Panc1 (cell line): ENCODE measurements at regions of chr3 and their contacts with region 1.

Region 1: DNA sequence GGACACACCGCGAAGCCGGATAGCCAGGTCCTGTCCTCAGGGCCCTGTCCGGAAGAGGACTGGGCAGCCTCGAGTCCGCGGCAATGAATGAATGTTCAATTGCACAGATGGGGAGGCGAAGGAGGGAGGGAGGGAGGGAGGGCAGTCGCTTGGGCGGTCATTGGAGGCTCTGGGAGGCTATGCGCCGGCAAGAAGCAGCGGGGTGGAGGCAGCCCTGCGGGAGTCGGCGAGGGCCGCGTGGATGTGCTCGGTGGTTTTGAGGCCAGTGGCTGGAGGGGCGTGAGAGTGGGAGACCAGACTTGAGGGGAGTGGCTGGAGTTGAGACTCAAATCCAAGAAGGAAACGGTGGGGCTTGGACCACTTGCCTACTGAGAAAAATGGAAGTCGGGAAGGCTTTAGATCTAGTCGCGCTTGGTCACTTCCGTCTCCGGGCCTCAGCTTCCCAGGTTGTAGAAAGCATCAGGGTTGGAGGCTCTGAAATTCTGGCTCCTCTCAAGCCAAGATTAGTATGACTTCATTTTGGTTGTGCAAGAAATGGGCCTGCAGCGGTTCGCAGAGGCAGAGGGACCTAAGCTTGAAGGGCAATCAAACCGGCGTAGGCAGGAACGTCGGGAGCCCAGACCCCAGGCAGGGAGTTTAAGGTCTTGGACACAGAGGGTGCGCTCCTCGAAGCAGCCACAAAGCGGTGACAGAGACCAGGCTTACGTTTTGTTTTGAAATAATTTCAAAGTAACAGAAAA is 21.1 kb upstream of the PLXND1 start:
- DNase-seq: peak; percentile 55
- ATAC-seq: peak; percentile 53
- H3K4me3 ChIP-seq: peak overlapping the region; percentile 59 to 77
- H3K27ac ChIP-seq: peak overlapping the region; percentile 97
- H3K4me1 ChIP-seq: peaks cover 36% of the 10 kb centered on the region
- H3K27me3 ChIP-seq: no peaks in the 10 kb centered on the region
- CTCF ChIP-seq: no peak

Region 2: DNA sequence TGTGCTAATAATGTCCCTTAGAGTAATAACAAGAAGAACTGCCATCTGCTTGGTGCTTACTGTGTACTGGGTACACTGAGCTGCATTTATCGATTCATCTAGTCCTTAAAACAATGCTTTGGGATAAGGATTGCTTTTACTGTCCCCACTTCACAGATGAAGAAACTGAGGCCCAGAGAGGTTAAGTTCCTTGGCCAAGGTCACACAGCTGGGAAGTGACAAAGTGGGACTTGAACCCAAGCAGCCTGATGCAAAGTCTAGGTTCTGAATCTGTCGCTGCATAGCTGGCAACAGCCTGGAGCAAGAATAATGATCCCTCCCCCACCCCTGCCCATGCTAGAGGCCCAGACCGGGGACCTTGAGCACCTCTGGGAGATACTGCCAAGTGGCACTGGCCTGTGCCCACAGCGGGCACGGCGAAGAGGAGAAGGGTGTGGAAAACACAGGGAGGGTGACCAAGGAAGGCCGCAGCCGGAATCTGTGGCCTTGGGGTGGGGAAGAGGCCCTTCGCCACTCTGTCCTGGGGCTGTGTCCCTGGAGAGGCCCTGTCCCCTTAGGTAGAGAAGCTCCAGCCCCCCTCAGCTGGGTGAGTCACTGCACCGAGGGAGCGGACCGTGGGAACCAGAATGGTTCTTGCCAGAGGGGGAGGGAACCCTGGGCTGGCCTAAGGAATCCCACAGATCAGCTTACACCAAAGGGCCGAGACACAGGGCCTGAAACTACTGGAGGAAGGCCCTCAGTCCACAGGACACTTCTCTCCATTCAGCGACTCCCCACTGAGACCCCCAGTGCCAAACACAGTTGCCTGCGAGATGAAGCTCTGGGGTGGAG is 24.7 kb before region 1 on chr3:
- CTCF ChIA-PET with region 1: interaction called, 10 read pairs
- POLR2A ChIA-PET with region 1: no interaction called
- in situ Hi-C with region 1: no loop called
- intact Hi-C with region 1: no loop called
- DNase-seq: no peak
- ATAC-seq: peak; percentile 13
- H3K4me3 ChIP-seq: peak overlapping the region; percentile 57 to 92
- H3K27ac ChIP-seq: peak overlapping the region; percentile 99
- H3K4me1 ChIP-seq: peaks cover 61% of the 10 kb centered on the region
- H3K27me3 ChIP-seq: no peaks in the 10 kb centered on the region
- CTCF ChIP-seq: no peak

Region 3: GRCh38 chr3:129768728-129769127 is 141.1 kb after region 1 on chr3:
- CTCF ChIA-PET with region 1: no interaction called
- POLR2A ChIA-PET with region 1: no interaction called
- in situ Hi-C with region 1: no loop called
- intact Hi-C with region 1: no loop called
- DNase-seq: no peak
- ATAC-seq: no peak
- H3K4me3 ChIP-seq: no peak overlapping the region
- H3K27ac ChIP-seq: no peak overlapping the region
- H3K4me1 ChIP-seq: 0 out of 2 replicates have a peak, but pooled peaks cover 2% of the 10 kb centered on the region
- H3K27me3 ChIP-seq: no peaks in the 10 kb centered on the region
- CTCF ChIP-seq: no peak

Region 4: GRCh38 chr3:129824926-129825541 is 197.4 kb after region 1 on chr3:
- CTCF ChIA-PET with region 1: interaction called, 6 read pairs
- POLR2A ChIA-PET with region 1: no interaction called
- in situ Hi-C with region 1: no loop called
- intact Hi-C with region 1: loop called (anchors 5 kb)
- DNase-seq: peak; percentile 47
- ATAC-seq: peak; percentile 87
- H3K4me3 ChIP-seq: no peak overlapping the region
- H3K27ac ChIP-seq: no peak overlapping the region
- H3K4me1 ChIP-seq: no peaks in the 10 kb centered on the region
- H3K27me3 ChIP-seq: no peaks in the 10 kb centered on the region
- CTCF ChIP-seq: peak; percentile 87

Region 5: GRCh38 chr3:129934234-129935123 is 306.9 kb after region 1 on chr3:
- CTCF ChIA-PET with region 1: no interaction called
- POLR2A ChIA-PET with region 1: no interaction called
- in situ Hi-C with region 1: no loop called
- intact Hi-C with region 1: loop called (anchors 1 kb)
- DNase-seq: peak; percentile 35
- ATAC-seq: peak; percentile 75
- H3K4me3 ChIP-seq: peak overlapping the region; percentile 34 to 69
- H3K27ac ChIP-seq: no peak overlapping the region
- H3K4me1 ChIP-seq: no peaks in the 10 kb centered on the region
- H3K27me3 ChIP-seq: no peaks in the 10 kb centered on the region
- CTCF ChIP-seq: peak; percentile 97

Region 6: GRCh38 chr3:130093741-130094391 is 466.3 kb after region 1 on chr3:
- CTCF ChIA-PET with region 1: no interaction called
- POLR2A ChIA-PET with region 1: no interaction called
- in situ Hi-C with region 1: no loop called
- intact Hi-C with region 1: loop called (anchors 10 kb)
- DNase-seq: no peak
- ATAC-seq: no peak
- H3K4me3 ChIP-seq: no peak overlapping the region
- H3K27ac ChIP-seq: no peak overlapping the region
- H3K4me1 ChIP-seq: no peaks in the 10 kb centered on the region
- H3K27me3 ChIP-seq: no peaks in the 10 kb centered on the region
- CTCF ChIP-seq: no peak